HepG2 (cell line): ENCODE measurements at regions of chr19 and their contacts with region 1.

Region 1: DNA sequence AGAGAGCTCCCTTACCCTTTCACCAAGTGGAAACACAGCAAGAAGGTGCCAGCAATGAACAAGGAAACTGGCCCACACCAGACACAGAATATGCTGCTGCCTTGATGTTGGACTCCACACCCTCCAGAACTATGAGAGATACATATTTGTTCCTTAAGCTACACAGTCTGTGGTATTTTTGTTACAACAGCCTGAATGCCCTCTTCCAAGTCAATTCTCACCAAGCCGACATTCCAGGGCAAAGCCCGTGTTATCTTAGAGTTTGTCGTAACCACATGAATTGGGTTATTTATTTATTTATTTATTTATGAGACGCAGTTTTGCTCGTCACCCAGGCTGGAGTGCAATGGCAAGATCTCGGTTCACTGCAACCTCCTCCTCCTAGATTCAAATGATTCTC is 14.9 kb downstream of the FGF21 start:
- DNase-seq: no peak
- ATAC-seq: no peak
- H3K4me3 ChIP-seq: no peak overlapping the region; a peak in 1 of 6 replicates
- H3K27ac ChIP-seq: no peak overlapping the region
- H3K4me1 ChIP-seq: peaks cover 63% of the 10 kb centered on the region
- H3K27me3 ChIP-seq: no peaks in the 10 kb centered on the region
- CTCF ChIP-seq: no peak
- EP300 ChIP-seq: no peak
- POLR2A ChIP-seq: no peak
- RAD21 ChIP-seq: no peak

Region 2: GRCh38 chr19:48713864-48714758 is 56.1 kb before region 1 on chr19:
- CTCF ChIA-PET with region 1: no interaction called
- POLR2A ChIA-PET with region 1: interaction called, 20 read pairs
- in situ Hi-C with region 1: no loop called
- intact Hi-C with region 1: no loop called
- DNase-seq: peak; percentile 99
- ATAC-seq: peak; percentile 85
- H3K4me3 ChIP-seq: peak overlapping the region; percentile 81 to 94 (median 89)
- H3K27ac ChIP-seq: peak overlapping the region; percentile 91
- H3K4me1 ChIP-seq: peaks cover 48% of the 10 kb centered on the region
- H3K27me3 ChIP-seq: no peaks in the 10 kb centered on the region; a peak in 1 of 5 replicates
- CTCF ChIP-seq: peak; percentile 23; the same call in 1 of the 2 replicates
- EP300 ChIP-seq: no peak
- POLR2A ChIP-seq: peak in 1 of 2 experiments; percentile 80; a peak in 3 of 4 replicates
- RAD21 ChIP-seq: 0 out of 2 replicates have a peak, but pooled peaks have one; percentile 27

Region 3: GRCh38 chr19:48755084-48755641 is 15.1 kb before region 1 on chr19 and contains the start of gene FGF21:
- CTCF ChIA-PET with region 1: no interaction called
- POLR2A ChIA-PET with region 1: interaction called, 30 read pairs
- in situ Hi-C with region 1: no loop called
- intact Hi-C with region 1: loop called (anchors 2 kb)
- DNase-seq: no peak
- ATAC-seq: no peak
- H3K4me3 ChIP-seq: no peak within 1 kb of the TSS
- H3K27ac ChIP-seq: no peak within 1 kb of the TSS
- H3K4me1 ChIP-seq: peaks cover 47% of the 10 kb centered on the region
- H3K27me3 ChIP-seq: no peaks in the 10 kb centered on the region
- CTCF ChIP-seq: no peak
- EP300 ChIP-seq: no peak
- POLR2A ChIP-seq: no peak
- RAD21 ChIP-seq: no peak
- total RNA-seq, gene FGF21: not detected in 2 replicates

Region 4: GRCh38 chr19:48806518-48806817 is 36.2 kb after region 1 on chr19:
- CTCF ChIA-PET with region 1: no interaction called
- POLR2A ChIA-PET with region 1: interaction called, 11 read pairs
- in situ Hi-C with region 1: no loop called
- intact Hi-C with region 1: no loop called
- DNase-seq: no peak
- ATAC-seq: no peak
- H3K4me3 ChIP-seq: peak overlapping the region in 2 of 3 experiments; percentile 73 to 78; a peak in 3 of 6 replicates
- H3K27ac ChIP-seq: peak overlapping the region; percentile 82
- H3K4me1 ChIP-seq: peaks cover 38% of the 10 kb centered on the region
- H3K27me3 ChIP-seq: no peaks in the 10 kb centered on the region
- CTCF ChIP-seq: 0 out of 2 replicates have a peak, but pooled peaks have one; percentile 2
- EP300 ChIP-seq: no peak
- POLR2A ChIP-seq: no peak
- RAD21 ChIP-seq: no peak